H1 (cell line): ENCODE measurements at regions of chr14 and their contacts with region 1.

Region 1: DNA sequence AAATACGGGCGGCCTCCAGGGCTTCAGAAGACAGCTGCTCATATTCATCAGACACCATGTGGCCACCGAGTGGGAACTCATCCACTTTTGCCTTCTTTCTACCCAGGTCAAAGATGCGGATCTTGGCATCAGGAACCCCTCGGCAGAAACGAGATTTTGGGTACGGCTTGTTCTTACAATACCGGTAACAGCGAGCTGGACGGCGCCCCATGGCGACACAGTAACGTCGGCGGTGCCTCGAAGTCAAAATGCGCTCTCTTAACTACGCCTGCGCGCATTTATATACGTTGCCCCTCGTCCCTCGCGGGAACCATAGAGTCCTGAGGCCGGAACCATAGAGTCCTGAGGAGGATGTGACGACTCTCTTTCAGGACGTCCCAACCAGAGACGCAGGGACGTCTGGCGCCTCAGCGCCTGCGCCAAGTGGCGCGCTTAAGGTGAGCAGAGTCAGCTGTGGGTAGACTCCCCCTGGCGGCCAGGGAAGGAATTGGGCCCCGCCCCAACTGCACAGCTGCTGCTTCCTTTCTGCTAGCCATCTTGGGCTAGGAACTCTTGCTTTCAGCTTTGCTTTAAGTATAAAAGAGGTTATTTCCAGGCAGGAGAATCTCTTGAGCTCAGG is at the start of gene RPL10L:
- DNase-seq: peak; percentile 27 to 82
- H3K4me3 ChIP-seq: no peak within 1 kb of the TSS
- H3K27ac ChIP-seq: no peak within 1 kb of the TSS
- H3K4me1 ChIP-seq: no peaks in the 10 kb centered on the region
- H3K27me3 ChIP-seq: no peaks in the 10 kb centered on the region
- CTCF ChIP-seq: peak; percentile 58 to 83 (median 68)
- EP300 ChIP-seq: no peak
- POLR2A ChIP-seq: no peak
- RAD21 ChIP-seq: peak; percentile 38 to 61
- total RNA-seq, gene RPL10L: not detected in 2 replicates

Region 2: GRCh38 chr14:46661728-46662127 is 10.1 kb after region 1 on chr14:
- CTCF ChIA-PET with region 1: interaction called, 14 read pairs
- POLR2A ChIA-PET with region 1: no interaction called
- DNase-seq: no peak
- H3K4me3 ChIP-seq: no peak overlapping the region
- H3K27ac ChIP-seq: no peak overlapping the region
- H3K4me1 ChIP-seq: no peaks in the 10 kb centered on the region
- H3K27me3 ChIP-seq: no peaks in the 10 kb centered on the region
- CTCF ChIP-seq: peak; percentile 21 to 66 (median 36)
- EP300 ChIP-seq: no peak
- POLR2A ChIP-seq: no peak
- RAD21 ChIP-seq: peak; percentile 44 to 50

Region 3: DNA sequence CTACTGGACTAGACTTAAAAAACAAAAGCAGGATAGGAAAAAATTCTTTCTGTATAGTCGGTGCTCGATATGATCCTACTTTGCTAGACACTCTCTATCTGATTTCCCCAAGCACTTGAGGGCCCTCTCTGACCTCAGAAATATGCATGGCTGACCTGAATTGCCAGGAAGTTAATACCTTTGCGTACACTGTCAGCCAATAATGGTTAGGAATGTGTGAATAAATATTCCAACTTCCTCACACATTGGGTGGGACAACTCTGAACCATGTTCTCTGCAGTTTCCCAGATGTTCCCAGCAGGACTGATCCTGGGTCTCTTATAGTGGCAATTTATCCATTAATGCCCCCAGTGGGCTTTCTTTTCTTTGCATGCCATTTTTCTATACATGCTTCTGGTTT is 20.5 kb after region 1 on chr14:
- CTCF ChIA-PET with region 1: interaction called, 14 read pairs
- POLR2A ChIA-PET with region 1: no interaction called
- DNase-seq: no peak
- H3K4me3 ChIP-seq: no peak overlapping the region
- H3K27ac ChIP-seq: no peak overlapping the region
- H3K4me1 ChIP-seq: peaks cover 0 to 3% (median 0%) of the 10 kb centered on the region in 4 experiments; a peak in 1 of 7 replicates
- H3K27me3 ChIP-seq: no peaks in the 10 kb centered on the region
- CTCF ChIP-seq: no peak
- EP300 ChIP-seq: no peak
- POLR2A ChIP-seq: no peak
- RAD21 ChIP-seq: no peak